A549 (cell line): ENCODE measurements at regions of chr15 and their contacts with region 1.

Region 1: DNA sequence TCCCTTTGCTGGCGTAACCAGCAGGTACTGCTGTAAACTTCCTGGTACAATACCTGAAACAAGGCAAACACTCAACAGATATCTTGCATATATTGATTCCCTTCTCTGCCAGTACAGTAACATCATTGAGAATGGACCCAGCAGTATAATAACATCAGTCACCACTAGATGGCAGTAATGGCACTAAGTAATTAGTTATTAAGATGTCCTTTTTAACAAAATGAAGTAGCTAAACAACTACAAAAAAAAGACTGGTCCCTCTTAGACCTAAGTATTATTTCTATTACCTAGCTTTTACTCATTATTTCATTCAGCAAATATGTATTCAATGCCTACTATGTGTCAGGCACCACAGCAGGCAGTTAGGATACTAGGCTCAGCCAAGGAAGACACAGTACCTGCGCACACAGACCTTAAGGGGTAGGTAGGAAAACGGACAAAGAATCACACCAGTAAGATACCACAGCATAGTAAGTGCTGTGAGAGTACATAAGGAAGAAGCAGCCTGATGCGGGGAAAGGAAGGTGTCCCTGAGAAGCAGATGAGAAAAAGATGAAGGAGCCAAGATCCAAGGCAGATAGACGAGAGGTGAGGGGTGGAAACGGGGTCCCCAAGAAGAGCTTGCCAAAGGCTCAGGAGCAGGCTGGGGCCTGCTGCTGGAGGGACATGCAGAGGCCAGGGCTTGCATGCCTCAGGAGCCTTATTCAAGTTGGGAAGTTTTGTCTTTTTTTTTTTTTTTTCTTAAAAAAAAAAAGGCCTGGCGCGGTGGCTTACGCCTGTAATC is 102.8 kb upstream of the CHD2 start:
- DNase-seq: peak; percentile 79 to 84
- ATAC-seq: peak; percentile 78 to 81
- H3K4me3 ChIP-seq: no peak overlapping the region
- H3K27ac ChIP-seq: peak overlapping the region; percentile 77 to 81
- H3K4me1 ChIP-seq: peaks cover 25% of the 10 kb centered on the region
- CTCF ChIP-seq: peak; percentile 96
- EP300 ChIP-seq: no peak
- POLR2A ChIP-seq: no peak
- RAD21 ChIP-seq: peak; percentile 88 to 91

Region 2: GRCh38 chr15:92772626-92773244 is 24.6 kb before region 1 on chr15:
- CTCF ChIA-PET with region 1: interaction called, 14 read pairs
- POLR2A ChIA-PET with region 1: interaction called, 4 read pairs
- DNase-seq: no peak
- ATAC-seq: no peak; a peak in 2 of 6 replicates
- H3K4me3 ChIP-seq: no peak overlapping the region
- H3K27ac ChIP-seq: no peak overlapping the region
- H3K4me1 ChIP-seq: no peaks in the 10 kb centered on the region
- CTCF ChIP-seq: no peak
- EP300 ChIP-seq: no peak
- POLR2A ChIP-seq: no peak
- RAD21 ChIP-seq: no peak

Region 3: DNA sequence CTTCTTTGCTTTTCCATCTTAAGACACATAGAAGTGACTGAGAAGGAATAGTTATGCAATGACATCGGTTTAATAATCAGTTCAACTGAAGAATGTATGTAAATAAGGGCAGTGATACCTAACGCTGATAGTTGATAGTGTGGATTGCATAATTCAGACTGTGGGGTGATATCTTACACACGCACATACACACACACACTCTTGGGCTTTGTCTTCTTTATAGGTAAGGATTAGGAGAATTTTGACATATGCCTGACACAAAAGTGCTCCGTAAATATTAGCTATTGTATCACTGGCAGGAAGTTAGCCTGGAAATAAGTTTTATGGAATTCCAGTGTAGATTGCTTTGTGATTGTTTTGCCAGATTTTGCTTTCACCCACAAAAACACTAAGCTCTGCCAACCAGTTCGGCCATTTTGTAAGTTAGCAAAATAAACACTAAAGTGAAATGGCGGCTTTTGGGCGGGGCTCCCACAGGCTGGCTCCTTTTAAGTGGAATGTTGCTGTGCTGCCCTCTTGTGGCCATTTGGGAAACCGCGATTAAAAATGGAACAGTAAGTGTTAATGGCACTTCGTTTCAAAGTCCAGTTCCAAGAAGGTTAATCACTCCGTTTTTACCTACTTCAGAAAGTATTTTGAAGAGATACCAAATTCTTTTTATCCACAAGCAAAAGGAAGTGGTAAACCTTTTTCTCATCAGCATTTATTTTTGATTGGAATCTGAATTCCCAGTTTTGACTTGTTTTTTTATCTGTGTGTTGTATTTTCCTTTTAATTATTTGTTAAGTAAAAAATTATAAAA is 120.4 kb after region 1 on chr15:
- CTCF ChIA-PET with region 1: interaction called, 167 read pairs
- POLR2A ChIA-PET with region 1: interaction called, 3 read pairs
- DNase-seq: peak; percentile 86 to 97
- ATAC-seq: peak; percentile 55 to 59
- H3K4me3 ChIP-seq: peak overlapping the region; percentile 28
- H3K27ac ChIP-seq: peak overlapping the region; percentile 79 to 88
- H3K4me1 ChIP-seq: peaks cover 95% of the 10 kb centered on the region
- CTCF ChIP-seq: peak; percentile 98
- EP300 ChIP-seq: no peak
- POLR2A ChIP-seq: no peak
- RAD21 ChIP-seq: peak; percentile 94 to 98

Region 4: DNA sequence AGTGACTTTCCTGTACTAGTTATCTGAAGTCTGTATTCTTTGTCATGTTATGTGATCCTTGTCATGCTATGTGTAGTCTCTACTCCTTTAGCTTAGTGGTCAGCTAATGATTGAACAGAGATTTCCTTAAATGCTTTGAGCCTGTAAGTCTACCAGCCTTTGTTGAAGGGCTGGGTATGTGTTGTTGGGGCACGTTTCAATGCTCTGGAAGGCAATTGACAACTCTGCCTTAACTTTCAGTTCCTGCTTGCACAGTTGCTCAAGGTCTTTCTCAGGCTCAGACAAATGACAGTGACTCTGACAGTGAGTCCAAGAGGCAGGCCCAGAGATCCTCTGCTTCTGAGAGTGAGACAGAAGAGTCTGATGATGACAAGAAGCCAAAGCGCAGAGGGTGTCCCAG is 192.1 kb after region 1 on chr15:
- CTCF ChIA-PET with region 1: interaction called, 11 read pairs
- POLR2A ChIA-PET with region 1: no interaction called
- DNase-seq: no peak
- ATAC-seq: no peak
- H3K4me3 ChIP-seq: no peak overlapping the region
- H3K27ac ChIP-seq: no peak overlapping the region
- H3K4me1 ChIP-seq: no peaks in the 10 kb centered on the region
- CTCF ChIP-seq: no peak
- EP300 ChIP-seq: no peak
- POLR2A ChIP-seq: no peak
- RAD21 ChIP-seq: no peak

Region 5: DNA sequence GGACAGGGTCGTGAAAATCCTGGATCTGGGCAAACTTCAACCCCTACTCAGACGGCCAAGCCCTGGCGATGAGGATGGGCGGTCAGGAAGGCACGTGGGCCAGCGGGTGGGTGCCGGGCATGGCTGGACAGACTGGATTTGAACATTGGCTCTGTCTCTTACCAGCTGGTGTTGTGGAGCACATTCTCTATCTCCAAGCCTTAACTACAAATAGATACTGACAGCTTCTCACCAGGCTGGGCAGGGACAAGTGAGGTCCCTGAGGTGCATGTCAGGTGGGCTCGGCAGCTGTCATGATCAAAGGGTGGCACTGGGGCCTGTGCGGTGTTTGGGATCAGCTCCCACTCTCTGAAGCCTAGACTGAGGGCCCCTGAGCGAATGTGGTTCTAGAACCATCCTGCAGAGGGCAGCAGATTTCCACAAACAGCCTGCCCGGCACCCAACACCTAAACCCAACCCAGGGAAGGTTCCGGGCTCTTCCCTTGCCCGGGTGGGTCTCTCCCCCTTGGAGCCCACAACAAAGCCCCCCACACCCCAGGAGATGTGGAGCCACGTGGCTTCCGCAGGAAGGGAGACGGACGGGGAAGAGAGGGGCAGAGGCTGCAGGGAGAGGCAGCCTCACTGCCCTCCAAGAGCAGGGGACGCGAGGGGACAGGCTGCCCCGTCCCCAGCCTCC is 233.2 kb after region 1 on chr15:
- CTCF ChIA-PET with region 1: interaction called, 29 read pairs
- POLR2A ChIA-PET with region 1: no interaction called
- DNase-seq: peak; percentile 69 to 91
- ATAC-seq: peak; percentile 70 to 89
- H3K4me3 ChIP-seq: no peak overlapping the region
- H3K27ac ChIP-seq: peak overlapping the region in 1 of 2 experiments; percentile 42; a peak in 2 of 6 replicates
- H3K4me1 ChIP-seq: peaks cover 24% of the 10 kb centered on the region; the same call in 2 of the 3 replicates
- CTCF ChIP-seq: peak; percentile 89
- EP300 ChIP-seq: no peak
- POLR2A ChIP-seq: no peak
- RAD21 ChIP-seq: peak; percentile 94 to 96